Tibial artery (tissue), 4 donors: ENCODE measurements at regions of chr4 and their contacts with region 1.

Region 1: GRCh38 chr4:1746265-1746691 is 25.0 kb downstream of the TACC3 start:
- DNase-seq: peak in 1 of 2 donors; percentile 75
- H3K4me3 ChIP-seq: no peak overlapping the region
- H3K27ac ChIP-seq: no peak overlapping the region
- H3K4me1 ChIP-seq: peaks cover 0 to 11% (median 0%) of the 10 kb centered on the region in 4 donors
- H3K27me3 ChIP-seq: peaks cover 0 to 42% of the 10 kb centered on the region in 2 donors
- CTCF ChIP-seq: peak; percentile 58 to 61

Region 2: GRCh38 chr4:1809754-1810511 is 63.7 kb after region 1 on chr4:
- intact Hi-C with region 1: loop called (anchors 2 kb)
- DNase-seq: no peak
- H3K4me3 ChIP-seq: no peak overlapping the region
- H3K27ac ChIP-seq: no peak overlapping the region
- H3K4me1 ChIP-seq: no peaks in the 10 kb centered on the region
- H3K27me3 ChIP-seq: no peaks in the 10 kb centered on the region
- CTCF ChIP-seq: peak; percentile 58 to 70

Region 3: DNA sequence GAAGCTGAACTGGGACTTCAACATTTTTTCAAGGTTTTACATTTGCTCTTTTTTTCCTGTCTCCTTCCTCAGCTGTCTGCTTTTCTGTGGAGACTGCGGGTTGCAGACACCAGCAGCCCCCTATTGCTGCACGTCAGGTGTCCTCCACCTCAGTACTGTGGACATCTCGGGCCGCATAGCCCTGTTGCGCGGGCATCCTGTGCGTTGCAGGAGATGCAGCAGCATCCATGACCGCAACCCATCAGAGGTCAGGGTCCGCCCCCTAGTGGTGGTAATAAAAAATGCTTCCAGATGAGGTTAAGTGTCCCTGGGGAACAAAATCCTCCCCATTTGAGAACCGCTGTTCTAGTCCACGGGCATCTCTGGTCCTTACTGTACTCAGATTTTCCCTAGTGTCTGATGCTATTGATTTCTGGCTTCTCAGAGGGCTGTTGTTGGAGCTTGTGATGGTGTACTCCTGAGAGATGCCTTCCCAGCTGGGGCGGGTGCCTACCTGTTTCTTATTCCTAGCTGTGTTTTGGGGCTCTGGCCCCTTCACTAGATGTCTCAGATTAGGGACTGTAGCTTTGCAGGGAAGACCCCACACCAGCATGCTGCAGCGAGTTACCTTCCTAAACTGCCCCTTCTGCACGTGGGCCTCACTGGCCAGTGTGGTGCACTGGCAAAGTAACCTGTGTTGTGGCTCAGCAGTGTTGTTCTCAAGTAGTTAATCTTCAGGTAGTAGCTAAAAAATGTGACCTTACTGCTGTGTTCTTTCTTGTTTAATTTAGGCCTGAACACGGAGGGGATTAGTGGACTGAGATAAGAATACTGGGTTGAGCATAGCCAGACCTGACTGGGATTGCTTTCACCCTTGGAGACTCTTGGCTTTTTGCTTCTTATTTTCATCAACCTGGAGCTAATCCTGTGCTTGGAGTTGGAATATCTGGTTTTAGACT is 153.1 kb after region 1 on chr4:
- intact Hi-C with region 1: loop called (anchors 5 kb)
- DNase-seq: peak; percentile 61 to 75
- H3K4me3 ChIP-seq: no peak overlapping the region
- H3K27ac ChIP-seq: no peak overlapping the region
- H3K4me1 ChIP-seq: peaks cover 0 to 9% (median 0%) of the 10 kb centered on the region in 4 donors
- H3K27me3 ChIP-seq: no peaks in the 10 kb centered on the region
- CTCF ChIP-seq: peak; percentile 80 to 85